ENCODE measurements at regions of chr10 and their contacts with region 1.

Region 1: GRCh38 chr10:96639899-96640298 is 53.1 kb upstream of the TM9SF3 start:
- DNase-seq: no peak
- H3K4me3 ChIP-seq: no peak overlapping the region
- H3K27me3 ChIP-seq: peaks cover 2% of the 10 kb centered on the region; the same call in 1 of the 2 replicates
- CTCF ChIP-seq: no peak

Region 2: DNA sequence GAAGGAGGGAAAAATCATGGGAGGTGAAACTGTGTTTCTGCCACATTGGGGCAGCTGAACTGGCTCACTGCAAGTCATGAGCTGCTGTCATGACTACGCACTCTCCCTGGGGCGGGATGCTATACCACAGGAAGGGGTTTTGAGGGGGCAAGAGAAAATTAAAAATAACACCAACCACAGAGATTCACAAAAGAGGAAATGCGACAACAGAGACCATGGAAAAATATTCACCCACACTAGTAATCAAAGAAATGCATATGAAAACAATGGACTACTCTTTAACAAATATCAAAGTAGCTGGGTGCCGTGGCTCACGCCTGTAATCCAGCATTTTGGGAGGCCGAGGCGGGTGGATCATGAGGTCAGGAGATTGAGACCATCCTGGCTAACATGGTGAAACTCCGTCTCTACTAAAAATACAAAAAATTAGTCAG is 12.1 kb after region 1 on chr10:
- CTCF ChIA-PET with region 1: interaction called, 13 read pairs
- POLR2A ChIA-PET with region 1: no interaction called
- DNase-seq: no peak
- H3K4me3 ChIP-seq: no peak overlapping the region
- H3K27me3 ChIP-seq: peaks cover 8% of the 10 kb centered on the region
- CTCF ChIP-seq: no peak

Region 3: DNA sequence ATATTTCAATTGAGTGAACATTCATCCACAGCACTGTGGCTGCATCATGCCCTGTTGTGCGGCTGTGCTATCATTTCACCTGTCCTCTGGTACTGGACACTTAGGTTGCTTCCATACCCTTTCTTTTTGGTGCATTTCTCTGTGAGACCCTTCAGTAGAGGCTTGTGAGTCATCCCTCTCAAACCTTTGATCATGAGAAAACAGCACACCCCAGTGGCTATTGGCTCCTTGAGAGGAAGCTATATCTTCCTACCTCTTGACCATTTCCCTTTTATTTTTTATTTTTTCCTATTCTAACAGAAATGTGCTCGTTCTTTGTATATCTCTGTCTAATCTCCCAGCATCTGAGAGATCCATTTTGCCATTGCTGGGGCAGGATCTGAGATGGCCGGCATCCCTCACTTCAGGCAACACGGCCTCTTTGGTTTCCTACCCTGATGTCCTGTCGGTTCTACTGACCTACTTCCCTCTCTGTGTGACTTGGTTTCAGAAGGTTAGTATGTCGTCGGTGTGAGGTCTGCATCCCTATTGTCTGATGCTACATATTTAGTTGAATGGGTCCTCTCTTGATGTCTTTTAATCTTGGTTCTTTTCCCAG is 104.2 kb after region 1 on chr10:
- CTCF ChIA-PET with region 1: interaction called, 12 read pairs
- POLR2A ChIA-PET with region 1: no interaction called
- DNase-seq: no peak
- H3K4me3 ChIP-seq: no peak overlapping the region
- H3K27me3 ChIP-seq: no peaks in the 10 kb centered on the region
- CTCF ChIP-seq: no peak

Region 4: GRCh38 chr10:96830511-96831199 is 190.8 kb after region 1 on chr10:
- CTCF ChIA-PET with region 1: interaction called, 12 read pairs
- POLR2A ChIA-PET with region 1: no interaction called
- DNase-seq: no peak
- H3K4me3 ChIP-seq: no peak overlapping the region
- H3K27me3 ChIP-seq: no peaks in the 10 kb centered on the region
- CTCF ChIP-seq: peak; percentile 82

Measured in BJ (cell line).